ENCODE measurements at regions of chr2 and their contacts with region 1.

Region 1: DNA sequence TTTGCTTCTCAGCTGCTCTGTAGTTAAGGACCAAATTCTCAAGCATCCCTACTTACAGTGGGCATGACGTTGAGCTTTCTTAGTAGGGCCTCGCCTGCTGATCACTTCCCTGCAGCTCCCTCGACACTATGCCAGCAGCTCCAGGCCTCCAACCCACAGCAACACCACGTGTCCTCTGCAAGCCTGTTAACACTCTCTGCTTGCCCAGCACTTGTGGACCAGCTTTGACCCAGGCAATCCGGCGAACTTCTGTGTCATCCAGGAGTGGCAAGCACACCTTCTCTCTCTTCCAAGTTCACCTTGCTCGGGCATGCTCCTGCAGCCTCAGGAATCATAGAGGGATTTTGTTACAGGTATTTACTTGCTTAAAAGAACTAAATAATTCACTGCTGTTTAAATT is 138.6 kb upstream of the FHL2 start:
- DNase-seq: no peak
- CTCF ChIP-seq: no peak

Region 2: GRCh38 chr2:105388971-105389381 is 148.5 kb before region 1 on chr2:
- in situ Hi-C with region 1: loop called (anchors 10 kb)
- DNase-seq: no peak
- CTCF ChIP-seq: no peak

Region 3: DNA sequence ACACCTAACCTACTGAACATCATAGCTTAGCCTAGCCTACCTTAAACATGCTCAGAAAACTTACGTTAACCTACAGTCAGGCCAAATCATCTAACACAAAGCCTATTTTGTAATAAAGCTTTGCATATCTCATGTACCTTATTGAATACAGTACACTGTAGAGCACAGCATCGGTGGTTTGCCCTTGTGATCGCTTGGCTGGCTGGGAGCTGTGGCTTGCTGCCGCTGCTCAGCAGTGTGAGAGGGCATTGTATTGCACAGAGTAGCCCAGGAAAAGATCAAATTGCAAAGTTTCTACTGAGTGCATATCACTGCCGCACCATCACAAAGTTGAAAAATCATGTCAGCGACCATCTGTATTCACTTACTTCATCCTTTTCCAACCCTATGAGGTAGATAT is 144.9 kb after region 1 on chr2:
- in situ Hi-C with region 1: no loop called
- DNase-seq: no peak
- CTCF ChIP-seq: no peak

Region 4: GRCh38 chr2:105950521-105951383 is 413.3 kb after region 1 on chr2:
- in situ Hi-C with region 1: no loop called
- DNase-seq: no peak
- CTCF ChIP-seq: no peak